K562 (cell line): ENCODE measurements at regions of chr7 and their contacts with region 1.

Region 1: GRCh38 chr7:26167301-26167934 is 15.4 kb downstream of the NFE2L3 start:
- DNase-seq: no peak
- ATAC-seq: no peak
- H3K4me3 ChIP-seq: no peak overlapping the region
- H3K27ac ChIP-seq: no peak overlapping the region
- H3K4me1 ChIP-seq: peaks cover 7 to 13% of the 10 kb centered on the region in 2 experiments; a peak in 4 of 5 replicates
- H3K27me3 ChIP-seq: no peaks in the 10 kb centered on the region
- CTCF ChIP-seq: no peak
- EP300 ChIP-seq: no peak
- POLR2A ChIP-seq: no peak
- RAD21 ChIP-seq: no peak

Region 2: GRCh38 chr7:26151953-26152781 is 15.3 kb before region 1 on chr7 and contains the start of gene NFE2L3:
- CTCF ChIA-PET with region 1: no interaction called
- POLR2A ChIA-PET with region 1: interaction called, 10 read pairs
- in situ Hi-C with region 1: no loop called
- intact Hi-C with region 1: no loop called
- DNase-seq: peak; percentile 91 to 96 (median 94)
- ATAC-seq: peak; percentile 90
- H3K4me3 ChIP-seq: peak within 1 kb of the TSS; percentile 75
- H3K27ac ChIP-seq: peak within 1 kb of the TSS; percentile 62; the same call in 2 of the 3 replicates
- H3K4me1 ChIP-seq: peaks cover 31 to 38% of the 10 kb centered on the region in 2 experiments
- H3K27me3 ChIP-seq: no peaks in the 10 kb centered on the region
- CTCF ChIP-seq: peak in 2 of 3 experiments; percentile 13 to 17; a peak in 1 of 6 replicates
- EP300 ChIP-seq: no peak
- POLR2A ChIP-seq: peak; percentile 69
- RAD21 ChIP-seq: no peak
- polyA plus RNA-seq, gene NFE2L3: 2.9 to 4.8 TPM

Region 3: DNA sequence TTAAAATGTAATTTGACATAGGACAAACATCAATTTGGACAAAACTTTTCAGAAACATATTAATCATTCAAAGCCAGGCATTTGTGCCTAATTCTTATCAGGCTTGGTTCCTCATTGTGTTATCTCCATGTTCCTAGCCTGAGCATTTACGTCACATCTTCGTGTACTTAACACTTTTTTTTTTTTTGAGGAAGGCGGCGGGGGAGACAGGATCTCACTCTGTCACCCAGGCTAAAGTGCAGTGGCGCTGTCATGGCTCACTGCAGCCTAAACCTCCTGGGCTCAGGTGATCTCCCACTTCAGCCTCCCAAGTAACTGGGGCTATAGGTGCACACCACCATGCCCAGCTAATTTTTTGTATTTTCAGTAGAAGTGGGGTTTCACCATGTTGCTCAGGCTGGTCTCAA is 13.4 kb after region 1 on chr7:
- CTCF ChIA-PET with region 1: no interaction called
- POLR2A ChIA-PET with region 1: interaction called, 23 read pairs
- in situ Hi-C with region 1: no loop called
- intact Hi-C with region 1: no loop called
- DNase-seq: peak in 2 of 4 experiments; percentile 61 to 86
- ATAC-seq: peak; percentile 50
- H3K4me3 ChIP-seq: no peak overlapping the region
- H3K27ac ChIP-seq: peak overlapping the region; percentile 40; the same call in 2 of the 3 replicates
- H3K4me1 ChIP-seq: peaks cover 15 to 38% of the 10 kb centered on the region in 2 experiments
- H3K27me3 ChIP-seq: no peaks in the 10 kb centered on the region
- CTCF ChIP-seq: no peak
- EP300 ChIP-seq: peak; percentile 79
- POLR2A ChIP-seq: no peak; the same call in 1 of the 2 replicates
- RAD21 ChIP-seq: no peak

Region 4: GRCh38 chr7:26187380-26188205 is 20.2 kb after region 1 on chr7:
- CTCF ChIA-PET with region 1: no interaction called
- POLR2A ChIA-PET with region 1: interaction called, 23 read pairs
- in situ Hi-C with region 1: no loop called
- intact Hi-C with region 1: no loop called
- DNase-seq: peak in 2 of 4 experiments; percentile 27 to 60
- ATAC-seq: peak; percentile 50
- H3K4me3 ChIP-seq: no peak overlapping the region
- H3K27ac ChIP-seq: peak overlapping the region; percentile 61
- H3K4me1 ChIP-seq: peaks cover 7 to 29% of the 10 kb centered on the region in 2 experiments; a peak in 4 of 5 replicates
- H3K27me3 ChIP-seq: no peaks in the 10 kb centered on the region
- CTCF ChIP-seq: no peak
- EP300 ChIP-seq: no peak
- POLR2A ChIP-seq: peak; percentile 86
- RAD21 ChIP-seq: no peak; a peak in 1 of 4 replicates

Region 5: DNA sequence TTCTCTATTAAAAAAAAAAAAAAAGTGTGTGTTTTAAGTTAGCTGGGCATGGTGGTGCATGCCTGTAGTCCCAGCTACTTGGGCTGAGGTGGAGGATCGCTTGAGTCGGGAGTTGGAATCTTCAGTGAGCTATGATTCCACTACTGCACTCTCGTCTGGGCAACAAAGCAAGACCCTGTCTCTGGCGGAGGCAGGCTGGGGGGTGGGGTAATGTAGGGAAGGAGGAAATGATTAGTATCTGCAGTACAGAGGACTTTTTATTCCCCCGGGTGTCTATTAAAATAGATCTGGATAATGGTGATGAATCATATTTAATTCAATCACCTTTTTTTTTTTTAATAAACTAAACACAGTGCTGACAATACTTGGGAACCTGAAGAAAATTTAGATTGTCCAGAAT is 40.6 kb after region 1 on chr7:
- CTCF ChIA-PET with region 1: no interaction called
- POLR2A ChIA-PET with region 1: no interaction called
- in situ Hi-C with region 1: no loop called
- intact Hi-C with region 1: no loop called
- DNase-seq: no peak
- ATAC-seq: no peak
- H3K4me3 ChIP-seq: no peak overlapping the region
- H3K27ac ChIP-seq: no peak overlapping the region
- H3K4me1 ChIP-seq: peaks cover 0 to 10% of the 10 kb centered on the region in 2 experiments; a peak in 2 of 5 replicates
- H3K27me3 ChIP-seq: no peaks in the 10 kb centered on the region
- CTCF ChIP-seq: no peak
- EP300 ChIP-seq: no peak
- POLR2A ChIP-seq: no peak
- RAD21 ChIP-seq: no peak

Region 6: DNA sequence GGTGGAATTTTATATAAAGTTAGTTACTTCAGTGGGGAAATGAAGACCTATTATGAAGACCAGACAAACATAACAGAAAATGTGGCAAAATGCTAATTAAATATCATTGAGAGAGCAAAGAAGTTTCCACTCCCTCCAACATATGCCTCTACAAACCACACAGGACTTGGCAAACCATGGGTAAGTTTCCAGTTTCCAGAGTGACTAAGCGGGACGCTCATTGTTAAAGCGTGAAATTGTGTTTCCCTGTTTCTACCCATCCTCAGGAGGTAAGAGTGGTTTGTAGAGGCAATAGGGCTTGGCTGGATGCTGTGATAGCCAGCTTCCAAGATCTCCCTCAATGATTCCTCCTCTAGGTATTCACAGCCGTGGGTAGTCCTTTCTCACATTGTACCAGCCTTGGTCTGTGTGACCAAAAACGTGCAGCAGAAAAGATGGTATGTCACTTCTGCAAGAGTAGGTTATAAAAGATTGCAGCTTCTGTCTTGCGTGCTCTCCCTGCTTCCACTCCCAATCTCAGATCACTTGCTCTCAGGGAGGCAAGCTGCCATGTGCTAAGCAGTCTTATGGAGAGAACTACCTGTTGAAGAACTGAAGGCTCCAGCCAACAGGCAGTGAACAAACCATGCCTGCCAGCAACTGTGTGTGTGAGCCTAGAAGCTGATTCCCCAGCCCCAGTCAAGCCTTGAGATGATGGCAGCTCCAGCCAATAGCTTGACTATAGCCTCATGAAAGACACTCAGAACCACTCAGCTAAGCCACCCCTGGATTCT is 69.8 kb after region 1 on chr7:
- CTCF ChIA-PET with region 1: no interaction called
- POLR2A ChIA-PET with region 1: no interaction called
- in situ Hi-C with region 1: no loop called
- intact Hi-C with region 1: no loop called
- DNase-seq: no peak
- ATAC-seq: peak; percentile 16
- H3K4me3 ChIP-seq: no peak overlapping the region
- H3K27ac ChIP-seq: 0 out of 3 replicates have a peak overlapping the region, but pooled peaks have one; percentile 49
- H3K4me1 ChIP-seq: peaks cover 12 to 34% of the 10 kb centered on the region in 2 experiments; a peak in 4 of 5 replicates
- H3K27me3 ChIP-seq: no peaks in the 10 kb centered on the region
- CTCF ChIP-seq: no peak
- EP300 ChIP-seq: no peak
- POLR2A ChIP-seq: no peak
- RAD21 ChIP-seq: no peak